ENCODE measurements at regions of chr11 and their contacts with region 1.

Region 1: DNA sequence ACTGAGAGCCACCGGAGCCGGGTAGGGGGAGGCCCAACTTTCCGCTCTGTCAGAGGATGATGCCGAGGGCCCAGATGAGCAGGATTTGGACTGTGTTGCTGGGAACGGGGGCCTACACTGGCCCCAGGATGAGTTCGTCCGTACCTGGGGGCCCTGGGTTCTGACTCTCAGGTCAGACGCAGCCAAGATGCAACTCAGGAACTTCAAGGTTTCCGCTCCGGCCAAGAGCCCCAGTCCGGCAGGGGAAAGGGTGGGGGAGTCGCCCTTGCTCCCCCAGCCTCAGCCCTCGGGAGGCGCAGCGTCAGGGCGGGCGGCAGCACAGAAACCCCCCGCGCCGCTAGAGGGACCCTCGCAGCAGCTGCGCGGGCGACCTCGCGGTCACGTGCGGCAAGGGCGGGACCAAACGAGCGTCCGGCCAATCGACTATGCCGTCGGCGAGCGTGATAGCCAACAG is 241 bp upstream of the ARL2 start:
- DNase-seq: peak; percentile 83
- H3K4me3 Mint-ChIP-seq: peak overlapping the region; percentile 90
- H3K27ac Mint-ChIP-seq: peak overlapping the region; percentile 99
- H3K4me1 Mint-ChIP-seq: peaks cover 22% of the 10 kb centered on the region
- H3K27me3 Mint-ChIP-seq: peaks cover 2% of the 10 kb centered on the region

Region 2: DNA sequence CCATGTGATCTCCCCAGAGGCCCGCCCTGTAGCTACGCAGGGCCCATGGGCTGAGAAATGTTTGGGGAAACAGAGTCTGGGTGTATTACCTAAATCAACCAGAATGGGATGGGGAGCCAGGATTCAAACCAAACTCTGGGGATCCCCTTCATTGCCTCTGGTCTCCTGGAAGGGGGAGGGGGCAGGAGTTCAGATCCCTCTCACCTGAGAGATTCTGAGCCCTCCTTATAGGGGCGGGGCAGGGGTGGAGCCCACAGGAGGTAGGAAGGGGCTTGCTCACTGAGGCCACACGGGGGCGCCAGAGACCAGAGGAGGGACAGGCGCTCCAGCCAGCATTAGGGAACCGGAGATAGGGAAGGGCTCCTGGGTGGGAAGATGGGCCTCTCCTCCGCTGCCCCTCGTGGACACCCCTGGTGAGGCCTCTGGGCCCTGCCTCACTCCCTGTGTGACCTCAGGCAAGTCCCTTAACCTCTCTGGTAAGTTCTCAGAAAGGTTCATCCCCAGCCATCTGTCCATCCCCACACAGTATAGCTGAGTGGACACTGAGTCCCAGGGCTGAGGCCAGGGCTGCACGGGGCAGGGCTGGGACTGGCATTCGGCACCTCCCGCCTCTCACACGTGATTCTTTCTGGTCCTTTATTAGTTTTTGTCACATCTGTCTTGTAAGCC is 166.6 kb before region 1 on chr11:
- intact Hi-C with region 1: loop called (anchors 1 kb)
- DNase-seq: peak; percentile 83
- H3K4me3 Mint-ChIP-seq: no peak overlapping the region
- H3K27ac Mint-ChIP-seq: no peak overlapping the region
- H3K4me1 Mint-ChIP-seq: peaks cover 32% of the 10 kb centered on the region
- H3K27me3 Mint-ChIP-seq: peaks cover 2% of the 10 kb centered on the region

Region 3: GRCh38 chr11:64924102-64924851 is 89.4 kb before region 1 on chr11 and contains the start of gene PPP2R5B:
- intact Hi-C with region 1: loop called (anchors 1 kb)
- DNase-seq: peak; percentile 89
- H3K4me3 Mint-ChIP-seq: peak within 1 kb of the TSS; percentile 93
- H3K27ac Mint-ChIP-seq: peak within 1 kb of the TSS; percentile 97
- H3K4me1 Mint-ChIP-seq: peaks cover 20% of the 10 kb centered on the region
- H3K27me3 Mint-ChIP-seq: no peaks in the 10 kb centered on the region
- total RNA-seq, gene PPP2R5B: 7.3 and 14.0 TPM in 2 replicates

Region 4: GRCh38 chr11:65027213-65028067 is 13.7 kb after region 1 on chr11 and contains the start of gene SNX15:
- intact Hi-C with region 1: loop called (anchors 1 kb)
- DNase-seq: peak; percentile 91
- H3K4me3 Mint-ChIP-seq: peak within 1 kb of the TSS; percentile 83
- H3K27ac Mint-ChIP-seq: peak within 1 kb of the TSS; percentile 83
- H3K4me1 Mint-ChIP-seq: peaks cover 23% of the 10 kb centered on the region
- H3K27me3 Mint-ChIP-seq: no peaks in the 10 kb centered on the region
- total RNA-seq, gene SNX15: 19.9 and 30.9 TPM in 2 replicates

Region 5: DNA sequence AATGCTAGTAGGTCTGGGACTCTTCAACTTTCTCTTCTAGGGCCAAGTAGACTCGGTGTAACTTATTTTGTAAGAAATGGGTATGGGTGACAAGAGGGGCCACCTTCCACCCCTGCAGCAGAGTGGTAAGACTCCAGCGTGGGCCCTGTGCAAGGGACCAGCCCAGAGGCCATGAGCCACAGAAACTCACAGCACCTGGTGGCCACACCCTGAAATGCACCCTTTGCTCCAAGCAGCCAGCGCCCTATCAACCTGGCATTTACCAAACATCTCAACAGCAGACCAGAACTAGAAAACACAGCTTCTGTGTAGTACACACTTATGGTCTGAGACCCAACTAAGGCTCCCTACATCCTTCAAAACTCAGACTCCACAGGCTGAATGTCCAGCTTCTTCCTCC is 64.4 kb after region 1 on chr11:
- intact Hi-C with region 1: loop called (anchors 1 kb)
- DNase-seq: peak; percentile 61
- H3K4me3 Mint-ChIP-seq: peak overlapping the region; percentile 37
- H3K27ac Mint-ChIP-seq: peak overlapping the region; percentile 71
- H3K4me1 Mint-ChIP-seq: peaks cover 53% of the 10 kb centered on the region
- H3K27me3 Mint-ChIP-seq: no peaks in the 10 kb centered on the region

Region 6: DNA sequence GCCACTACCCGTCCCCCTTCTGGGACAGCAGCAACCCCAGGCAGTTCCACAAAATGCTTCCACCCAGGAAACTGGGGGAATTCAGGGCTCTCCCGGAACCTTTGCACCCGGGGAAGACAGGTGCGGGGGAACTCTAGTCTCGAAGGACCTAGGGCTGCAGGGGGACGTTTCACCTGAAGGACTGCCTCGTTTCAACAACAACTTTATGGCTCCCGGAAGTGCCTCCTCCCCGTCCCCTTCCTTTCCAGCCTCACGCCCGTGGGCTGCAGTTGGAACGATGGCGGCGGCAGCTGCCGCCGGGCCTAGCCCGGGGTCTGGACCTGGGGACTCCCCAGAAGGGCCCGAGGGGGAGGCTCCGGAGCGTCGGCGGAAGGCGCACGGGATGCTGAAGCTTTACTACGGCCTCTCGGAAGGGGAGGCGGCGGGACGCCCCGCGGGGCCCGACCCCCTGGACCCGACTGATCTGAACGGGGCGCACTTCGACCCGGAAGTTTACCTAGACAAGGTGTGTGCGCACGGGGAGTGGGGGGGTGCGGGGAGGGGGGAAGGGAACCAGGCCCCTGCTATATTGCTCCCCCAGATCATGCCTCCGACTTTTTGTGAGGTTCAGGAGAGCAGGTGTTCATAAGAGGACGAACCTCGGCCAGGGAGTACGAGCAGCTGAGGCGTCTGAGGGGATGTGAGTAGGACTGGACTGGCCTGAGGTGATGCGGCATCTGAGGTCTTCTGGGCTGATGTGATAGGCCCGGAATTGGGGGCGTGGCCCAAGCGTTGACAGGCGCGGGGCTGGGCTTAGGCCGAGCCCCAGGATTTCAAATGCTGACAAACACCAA is 82.5 kb after region 1 on chr11 and contains the start of gene VPS51:
- intact Hi-C with region 1: loop called (anchors 1 kb)
- DNase-seq: peak; percentile 80
- H3K4me3 Mint-ChIP-seq: peak within 1 kb of the TSS; percentile 91
- H3K27ac Mint-ChIP-seq: peak within 1 kb of the TSS; percentile 94
- H3K4me1 Mint-ChIP-seq: peaks cover 11% of the 10 kb centered on the region
- H3K27me3 Mint-ChIP-seq: no peaks in the 10 kb centered on the region
- total RNA-seq, gene VPS51: 137 and 139 TPM in 2 replicates

Region 7: GRCh38 chr11:65117216-65118096 is 103.7 kb after region 1 on chr11 and contains the start of gene ZNHIT2:
- intact Hi-C with region 1: loop called (anchors 1 kb)
- DNase-seq: peak; percentile 100
- H3K4me3 Mint-ChIP-seq: peak within 1 kb of the TSS; percentile 90
- H3K27ac Mint-ChIP-seq: peak within 1 kb of the TSS; percentile 93
- H3K4me1 Mint-ChIP-seq: peaks cover 52% of the 10 kb centered on the region
- H3K27me3 Mint-ChIP-seq: no peaks in the 10 kb centered on the region
- total RNA-seq, gene ZNHIT2: 20.8 and 22.1 TPM in 2 replicates